Right cardiac atrium (tissue), 5 donors: ENCODE measurements at regions of chr6 and their contacts with region 1.

Region 1: GRCh38 chr6:7974938-7975763 is 64.6 kb upstream of the TXNDC5 start:
- DNase-seq: peak; percentile 89 to 95 (median 91)
- ATAC-seq: peak; percentile 98
- H3K4me3 ChIP-seq: peak overlapping the region; percentile 4
- H3K27ac ChIP-seq: peak overlapping the region; percentile 66
- H3K4me1 ChIP-seq: peaks cover 14% of the 10 kb centered on the region
- H3K27me3 ChIP-seq: no peaks in the 10 kb centered on the region

Region 2: GRCh38 chr6:7912024-7912423 is 63.1 kb before region 1 on chr6:
- intact Hi-C with region 1: loop called in 1 of 4 experiments (anchors 2 kb)
- DNase-seq: peak; percentile 68 to 80 (median 72)
- ATAC-seq: peak; percentile 17 to 25
- H3K4me3 ChIP-seq: no peak overlapping the region
- H3K27ac ChIP-seq: no peak overlapping the region
- H3K4me1 ChIP-seq: peaks cover 10% of the 10 kb centered on the region
- H3K27me3 ChIP-seq: no peaks in the 10 kb centered on the region